ENCODE measurements at regions of chr1 and their contacts with region 1.

Region 1: GRCh38 chr1:91529856-91530255 is 29.2 kb downstream of the CDC7 start:
- DNase-seq: peak; percentile 12
- ATAC-seq: peak; percentile 64; the same call in 1 of the 2 replicates
- H3K4me3 ChIP-seq: no peak overlapping the region
- H3K27ac ChIP-seq: no peak overlapping the region
- H3K4me1 ChIP-seq: no peaks in the 10 kb centered on the region
- H3K27me3 ChIP-seq: no peaks in the 10 kb centered on the region
- CTCF ChIP-seq: peak; percentile 24 to 63 (median 59); a peak in 4 of 6 replicates
- POLR2A ChIP-seq: no peak
- RAD21 ChIP-seq: peak; percentile 81

Region 2: DNA sequence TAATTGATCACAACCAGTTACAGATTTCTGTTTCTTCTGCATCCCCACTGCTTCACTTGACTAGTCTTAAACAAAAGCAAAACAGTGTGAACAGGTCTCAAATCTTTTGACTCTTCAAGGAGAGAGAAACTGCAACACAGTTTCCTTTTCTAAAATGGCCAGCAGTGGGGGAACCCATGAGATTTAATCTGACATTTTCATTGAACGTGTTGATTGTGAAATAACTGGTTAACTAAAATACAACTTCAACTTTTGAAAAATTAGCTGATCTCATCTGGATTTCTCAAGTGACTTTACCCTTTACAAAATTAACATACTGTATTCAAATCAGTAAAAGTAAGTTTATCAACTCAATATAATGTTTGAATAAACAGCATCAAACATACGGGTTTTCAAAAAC is 268.2 kb before region 1 on chr1:
- CTCF ChIA-PET with region 1: no interaction called
- POLR2A ChIA-PET with region 1: no interaction called
- RAD21 ChIA-PET with region 1: no interaction called
- intact Hi-C with region 1: no loop called
- DNase-seq: no peak
- ATAC-seq: no peak
- H3K4me3 ChIP-seq: no peak overlapping the region
- H3K27ac ChIP-seq: no peak overlapping the region
- H3K4me1 ChIP-seq: no peaks in the 10 kb centered on the region
- H3K27me3 ChIP-seq: no peaks in the 10 kb centered on the region
- CTCF ChIP-seq: no peak
- POLR2A ChIP-seq: no peak
- RAD21 ChIP-seq: no peak

Region 3: DNA sequence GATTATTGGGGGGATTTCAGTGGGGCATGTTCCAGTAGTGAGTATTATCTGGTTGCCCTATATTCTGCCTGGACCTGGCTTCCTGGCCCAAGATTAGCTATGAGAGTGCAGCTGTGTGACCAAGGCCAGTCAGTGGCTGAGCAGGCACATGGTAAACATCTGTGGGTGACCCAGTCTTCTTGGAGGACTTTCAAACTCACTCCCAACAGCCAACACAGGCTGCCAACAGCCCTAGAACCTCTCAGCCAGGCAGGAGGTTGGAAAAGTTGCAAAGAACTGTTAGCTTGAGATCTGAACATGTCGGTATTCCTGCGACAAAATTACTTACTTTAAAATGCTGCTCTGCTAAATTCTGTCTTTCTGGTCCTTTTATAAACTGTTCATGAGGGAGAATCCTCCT is 163.7 kb after region 1 on chr1:
- CTCF ChIA-PET with region 1: no interaction called
- POLR2A ChIA-PET with region 1: no interaction called
- RAD21 ChIA-PET with region 1: no interaction called
- intact Hi-C with region 1: no loop called
- DNase-seq: no peak
- ATAC-seq: no peak
- H3K4me3 ChIP-seq: no peak overlapping the region
- H3K27ac ChIP-seq: no peak overlapping the region
- H3K4me1 ChIP-seq: no peaks in the 10 kb centered on the region
- H3K27me3 ChIP-seq: no peaks in the 10 kb centered on the region
- CTCF ChIP-seq: no peak
- POLR2A ChIP-seq: no peak
- RAD21 ChIP-seq: no peak

Region 4: DNA sequence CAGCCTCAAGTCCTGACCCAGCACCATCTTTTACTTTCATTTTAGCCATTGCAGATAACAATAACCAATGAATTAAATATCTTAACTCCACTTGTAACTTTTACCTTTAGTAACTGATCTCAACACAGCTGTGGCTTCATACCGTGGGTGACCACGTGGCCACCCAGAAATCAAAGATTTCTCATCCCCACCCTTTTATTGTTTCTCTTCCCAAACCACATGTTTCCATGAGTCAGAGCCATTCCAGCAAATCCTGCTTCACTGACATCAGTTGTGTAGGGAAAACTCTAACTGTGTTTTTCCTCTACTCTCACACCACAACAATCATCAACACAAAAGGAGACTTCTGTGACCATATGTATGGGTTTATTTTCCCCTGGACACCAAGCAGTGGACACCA is 394.3 kb after region 1 on chr1:
- CTCF ChIA-PET with region 1: interaction called, 3 read pairs
- POLR2A ChIA-PET with region 1: no interaction called
- RAD21 ChIA-PET with region 1: no interaction called
- intact Hi-C with region 1: loop called (anchors 1 kb)
- DNase-seq: no peak
- ATAC-seq: no peak
- H3K4me3 ChIP-seq: no peak overlapping the region
- H3K27ac ChIP-seq: no peak overlapping the region
- H3K4me1 ChIP-seq: peaks cover 4 to 9% of the 10 kb centered on the region in 2 experiments; a peak in 1 of 4 replicates
- H3K27me3 ChIP-seq: no peaks in the 10 kb centered on the region
- CTCF ChIP-seq: no peak
- POLR2A ChIP-seq: no peak
- RAD21 ChIP-seq: no peak

Region 5: GRCh38 chr1:92277105-92277723 is 747.4 kb after region 1 on chr1:
- CTCF ChIA-PET with region 1: no interaction called
- POLR2A ChIA-PET with region 1: no interaction called
- RAD21 ChIA-PET with region 1: no interaction called
- intact Hi-C with region 1: loop called (anchors 5 kb)
- DNase-seq: no peak
- ATAC-seq: no peak
- H3K4me3 ChIP-seq: no peak overlapping the region
- H3K27ac ChIP-seq: no peak overlapping the region
- H3K4me1 ChIP-seq: no peaks in the 10 kb centered on the region
- H3K27me3 ChIP-seq: no peaks in the 10 kb centered on the region
- CTCF ChIP-seq: no peak
- POLR2A ChIP-seq: no peak
- RAD21 ChIP-seq: no peak